Naive thymus-derived CD4-positive, alpha-beta T cell (primary cell): ENCODE measurements at regions of chr13 and their contacts with region 1.

Region 1: DNA sequence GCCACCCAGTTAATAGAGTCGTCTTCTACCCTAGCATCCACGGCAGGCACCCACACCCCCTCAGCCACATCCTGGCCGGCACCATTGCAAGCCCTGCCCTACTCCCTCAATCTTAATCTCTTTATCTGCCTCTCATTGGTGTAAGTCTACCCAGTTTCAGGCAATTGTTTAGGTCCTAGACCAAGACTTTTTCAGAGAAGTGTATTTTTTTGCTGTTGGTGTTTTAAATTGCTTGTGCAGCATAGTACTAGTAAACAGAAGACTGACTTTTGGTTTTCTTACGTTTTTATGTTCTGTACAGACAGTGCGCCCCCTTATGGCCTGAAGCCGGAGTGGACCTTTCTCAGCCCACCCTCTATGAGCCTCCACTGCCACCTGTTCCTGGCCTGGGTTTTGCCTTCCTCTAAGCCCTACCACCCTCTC is 2.3 kb upstream of the LCP1 start:
- DNase-seq: peak in 8 of 9 donors; percentile 60 to 74 (median 69)
- ATAC-seq: peak; percentile 75
- H3K4me3 ChIP-seq: peak overlapping the region; percentile 83
- H3K4me3 Mint-ChIP-seq: peak overlapping the region; percentile 67 to 99 (median 85)
- H3K27ac ChIP-seq: peak overlapping the region; percentile 82
- H3K27ac Mint-ChIP-seq: peak overlapping the region; percentile 86 to 99 (median 96)
- H3K4me1 ChIP-seq: peaks cover 27 to 35% of the 10 kb centered on the region in 2 donors
- H3K4me1 Mint-ChIP-seq: peaks cover 35 to 48% (median 38%) of the 10 kb centered on the region in 7 donors
- H3K27me3 ChIP-seq: no peaks in the 10 kb centered on the region
- H3K27me3 Mint-ChIP-seq: peaks cover 0 to 3% (median 0%) of the 10 kb centered on the region in 5 donors

Region 2: GRCh38 chr13:45417790-45418534 is 766.3 kb before region 1 on chr13 and contains the start of gene SLC25A30:
- CTCF ChIA-PET with region 1: no interaction called
- POLR2A ChIA-PET with region 1: no interaction called
- intact Hi-C with region 1: loop called in 1 of 2 experiments (anchors 5 kb)
- DNase-seq: peak; percentile 73 to 90 (median 87)
- ATAC-seq: peak; percentile 97
- H3K4me3 ChIP-seq: peak within 1 kb of the TSS; percentile 97
- H3K4me3 Mint-ChIP-seq: peak within 1 kb of the TSS; percentile 90 to 98 (median 96)
- H3K27ac ChIP-seq: peak within 1 kb of the TSS; percentile 79
- H3K27ac Mint-ChIP-seq: peak within 1 kb of the TSS; percentile 92 to 99 (median 96)
- H3K4me1 ChIP-seq: peaks cover 4 to 21% of the 10 kb centered on the region in 2 donors
- H3K4me1 Mint-ChIP-seq: peaks cover 0 to 36% (median 27%) of the 10 kb centered on the region in 7 donors
- H3K27me3 ChIP-seq: no peaks in the 10 kb centered on the region
- H3K27me3 Mint-ChIP-seq: no peaks in the 10 kb centered on the region
- total RNA-seq, gene SLC25A30: 13.3 to 29.4 (median 23.6) TPM

Region 3: DNA sequence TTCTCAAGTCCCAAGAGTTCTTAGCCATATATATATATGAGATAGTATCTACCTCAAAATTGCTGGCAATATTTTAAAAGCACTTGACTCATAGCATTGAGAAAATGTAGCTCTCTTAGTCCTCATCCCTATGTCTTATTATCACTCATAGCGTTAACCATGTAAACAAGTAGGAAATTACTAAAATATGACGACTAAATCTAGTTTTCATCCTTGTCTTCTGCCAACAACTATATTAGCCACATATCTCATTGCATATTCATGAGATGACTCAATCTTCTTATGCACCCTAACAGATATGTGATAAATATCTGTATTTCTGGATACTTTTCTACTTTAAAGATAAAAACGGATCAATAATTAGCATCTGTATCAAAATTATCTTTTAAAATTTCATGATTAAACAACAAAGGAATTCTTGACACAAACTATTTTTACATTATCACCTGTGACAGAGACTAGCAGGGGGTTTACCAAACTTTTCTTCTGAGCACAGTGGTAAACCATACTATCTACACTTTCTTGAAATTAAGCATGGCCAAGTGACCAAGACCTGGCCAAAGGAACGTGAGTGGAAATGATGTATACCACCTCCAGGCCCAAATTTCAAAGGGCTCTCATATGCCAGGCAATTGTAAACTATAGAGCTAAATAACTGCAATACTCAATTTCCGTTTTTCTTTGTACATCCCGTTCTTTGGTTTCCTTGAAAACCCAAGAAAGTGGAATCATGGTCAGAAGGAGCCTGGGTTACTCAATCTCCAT is 177.4 kb before region 1 on chr13:
- CTCF ChIA-PET with region 1: no interaction called
- POLR2A ChIA-PET with region 1: no interaction called
- intact Hi-C with region 1: no loop called
- DNase-seq: no peak
- ATAC-seq: no peak
- H3K4me3 ChIP-seq: no peak overlapping the region
- H3K4me3 Mint-ChIP-seq: no peak overlapping the region
- H3K27ac ChIP-seq: no peak overlapping the region
- H3K27ac Mint-ChIP-seq: no peak overlapping the region
- H3K4me1 ChIP-seq: no peaks in the 10 kb centered on the region
- H3K4me1 Mint-ChIP-seq: peaks cover 3 to 17% (median 11%) of the 10 kb centered on the region in 7 donors
- H3K27me3 ChIP-seq: no peaks in the 10 kb centered on the region
- H3K27me3 Mint-ChIP-seq: no peaks in the 10 kb centered on the region

Region 4: DNA sequence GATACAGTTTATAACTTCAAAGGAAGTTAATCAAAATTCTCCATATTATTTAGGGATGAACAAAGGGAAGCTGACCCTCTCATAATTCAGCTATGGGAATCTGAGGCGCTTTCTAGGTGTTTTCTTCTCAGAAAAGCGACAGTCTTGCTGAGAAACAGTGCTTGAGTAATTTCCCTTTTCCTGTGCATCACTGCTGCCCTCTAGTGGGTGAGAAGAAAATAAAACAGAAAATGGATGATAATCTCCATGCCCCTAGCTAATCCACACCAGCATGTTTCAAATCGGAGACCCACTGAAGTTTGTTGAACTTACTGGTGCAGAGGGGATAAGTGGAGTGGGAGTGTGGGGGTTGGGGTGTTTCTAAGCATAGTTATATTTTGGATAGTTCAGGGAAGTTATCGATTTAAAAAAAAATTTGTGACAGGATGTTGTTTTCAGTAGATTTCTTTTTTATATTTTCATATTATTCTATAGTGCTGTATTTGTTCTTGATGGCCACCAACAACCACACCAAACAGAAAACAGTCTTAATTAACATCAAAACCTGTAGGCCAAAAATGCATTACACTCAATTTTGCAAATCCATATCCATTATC is 23.7 kb before region 1 on chr13:
- CTCF ChIA-PET with region 1: interaction called, 13 read pairs
- POLR2A ChIA-PET with region 1: interaction called, 21 read pairs
- intact Hi-C with region 1: loop called (anchors 1 kb)
- DNase-seq: peak in 7 of 9 donors; percentile 59 to 78 (median 74)
- ATAC-seq: peak; percentile 91
- H3K4me3 ChIP-seq: no peak overlapping the region
- H3K4me3 Mint-ChIP-seq: peak overlapping the region; percentile 27 to 82 (median 74)
- H3K27ac ChIP-seq: peak overlapping the region; percentile 69
- H3K27ac Mint-ChIP-seq: peak overlapping the region; percentile 79 to 97 (median 91)
- H3K4me1 ChIP-seq: peaks cover 33 to 46% of the 10 kb centered on the region in 2 donors
- H3K4me1 Mint-ChIP-seq: peaks cover 49 to 58% (median 54%) of the 10 kb centered on the region in 7 donors
- H3K27me3 ChIP-seq: no peaks in the 10 kb centered on the region
- H3K27me3 Mint-ChIP-seq: no peaks in the 10 kb centered on the region

Region 5: GRCh38 chr13:46211483-46212351 is 27.4 kb after region 1 on chr13 and contains the start of gene LRRC63:
- CTCF ChIA-PET with region 1: interaction called, 3 read pairs
- POLR2A ChIA-PET with region 1: interaction called, 9 read pairs
- intact Hi-C with region 1: loop called (anchors 1 kb)
- DNase-seq: peak; percentile 69 to 88 (median 80)
- ATAC-seq: peak; percentile 98
- H3K4me3 ChIP-seq: peak within 1 kb of the TSS; percentile 81
- H3K4me3 Mint-ChIP-seq: peak within 1 kb of the TSS; percentile 83 to 100 (median 93)
- H3K27ac ChIP-seq: peak within 1 kb of the TSS; percentile 88
- H3K27ac Mint-ChIP-seq: peak within 1 kb of the TSS; percentile 91 to 98 (median 94)
- H3K4me1 ChIP-seq: peaks cover 5 to 8% of the 10 kb centered on the region in 2 donors
- H3K4me1 Mint-ChIP-seq: peaks cover 7 to 37% (median 26%) of the 10 kb centered on the region in 7 donors
- H3K27me3 ChIP-seq: no peaks in the 10 kb centered on the region
- H3K27me3 Mint-ChIP-seq: peaks cover 0 to 6% (median 0%) of the 10 kb centered on the region in 5 donors
- total RNA-seq, gene LRRC63: 0.19 to 0.80 (median 0.49) TPM

Region 6: GRCh38 chr13:46668302-46668720 is 484.0 kb after region 1 on chr13:
- CTCF ChIA-PET with region 1: no interaction called
- POLR2A ChIA-PET with region 1: no interaction called
- intact Hi-C with region 1: loop called in 1 of 2 experiments (anchors 5 kb)
- DNase-seq: no peak
- ATAC-seq: peak; percentile 49
- H3K4me3 ChIP-seq: peak overlapping the region; percentile 55
- H3K4me3 Mint-ChIP-seq: peak overlapping the region; percentile 78 to 89 (median 84)
- H3K27ac ChIP-seq: peak overlapping the region; percentile 56
- H3K27ac Mint-ChIP-seq: peak overlapping the region; percentile 79 to 93 (median 88)
- H3K4me1 ChIP-seq: peaks cover 0 to 26% of the 10 kb centered on the region in 2 donors
- H3K4me1 Mint-ChIP-seq: peaks cover 35 to 65% (median 52%) of the 10 kb centered on the region in 7 donors
- H3K27me3 ChIP-seq: no peaks in the 10 kb centered on the region
- H3K27me3 Mint-ChIP-seq: no peaks in the 10 kb centered on the region